ENCODE measurements at regions of chr4 and their contacts with region 1.

Region 1: GRCh38 chr4:39977489-39978377 is at the start of gene PDS5A:
- DNase-seq: peak; percentile 86 to 92
- ATAC-seq: peak; percentile 89 to 93 (median 91)
- H3K4me3 ChIP-seq: peak within 1 kb of the TSS; percentile 72 to 98 (median 93)
- H3K27ac ChIP-seq: peak within 1 kb of the TSS; percentile 84 to 96 (median 94)
- H3K4me1 ChIP-seq: peaks cover 0 to 34% (median 20%) of the 10 kb centered on the region in 9 donors
- H3K27me3 ChIP-seq: no peaks in the 10 kb centered on the region
- CTCF ChIP-seq: peak; percentile 74 to 95 (median 87)
- total RNA-seq, gene PDS5A: 22.9 to 36.2 (median 31.0) TPM

Region 2: DNA sequence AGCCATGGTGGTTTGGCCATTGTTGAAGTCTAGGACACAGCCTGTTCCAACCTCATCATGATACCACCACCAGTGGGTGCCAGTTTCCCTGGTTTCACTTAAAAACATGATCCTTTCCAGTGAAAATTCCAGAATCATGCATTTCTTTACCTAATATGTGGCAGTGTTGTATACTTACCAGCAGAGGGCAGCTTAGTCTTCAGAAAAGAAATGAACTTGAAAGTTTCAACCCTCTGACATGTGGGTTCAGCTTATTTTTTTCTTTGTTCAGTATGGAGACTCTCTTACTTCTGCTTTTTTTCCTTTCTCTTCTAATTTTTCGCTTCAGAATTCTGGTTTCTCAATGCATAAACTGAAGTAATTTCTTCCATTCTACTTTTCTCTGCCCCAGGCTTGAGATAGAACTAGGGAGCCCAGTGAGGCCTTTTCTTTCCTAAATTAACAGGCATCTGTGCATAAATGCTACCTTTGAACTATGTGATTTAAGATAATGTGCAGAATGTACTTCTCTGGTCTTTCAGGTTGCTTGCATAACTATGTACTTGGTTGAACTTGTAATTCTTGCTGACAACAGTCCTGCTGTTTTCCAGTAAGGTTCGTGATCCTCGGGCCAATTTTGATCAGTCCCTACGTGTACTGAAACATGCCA is 508.2 kb before region 1 on chr4:
- intact Hi-C with region 1: loop called in 9 of 10 experiments (anchors 1 to 5 kb)
- DNase-seq: peak in 1 of 2 donors; percentile 16
- ATAC-seq: peak in 7 of 8 donors; percentile 64 to 85 (median 74)
- H3K4me3 ChIP-seq: no peak overlapping the region
- H3K27ac ChIP-seq: peak overlapping the region in 2 of 10 donors; percentile 11 to 66
- H3K4me1 ChIP-seq: peaks cover 0 to 12% (median 0%) of the 10 kb centered on the region in 9 donors
- H3K27me3 ChIP-seq: no peaks in the 10 kb centered on the region
- CTCF ChIP-seq: peak; percentile 58 to 89 (median 83)

Region 3: GRCh38 chr4:39638354-39639240 is 339.1 kb before region 1 on chr4 and contains the start of gene SMIM14:
- intact Hi-C with region 1: loop called in 3 of 10 experiments (anchors 5 kb)
- DNase-seq: peak; percentile 98 to 99
- ATAC-seq: peak; percentile 97 to 100 (median 98)
- H3K4me3 ChIP-seq: peak within 1 kb of the TSS; percentile 80 to 95 (median 92)
- H3K27ac ChIP-seq: peak within 1 kb of the TSS; percentile 86 to 99 (median 98)
- H3K4me1 ChIP-seq: peaks cover 0 to 35% (median 27%) of the 10 kb centered on the region in 9 donors
- H3K27me3 ChIP-seq: no peaks in the 10 kb centered on the region
- CTCF ChIP-seq: peak in 4 of 9 donors; percentile 24 to 35 (median 27)
- total RNA-seq, gene SMIM14: 9.3 to 15.2 (median 11.8) TPM

Region 4: GRCh38 chr4:39697740-39698423 is 279.9 kb before region 1 on chr4 and contains the start of gene UBE2K:
- intact Hi-C with region 1: loop called (anchors 1 to 5 kb)
- DNase-seq: peak; percentile 86 to 93
- ATAC-seq: peak; percentile 97 to 100 (median 98)
- H3K4me3 ChIP-seq: peak within 1 kb of the TSS; percentile 69 to 95 (median 80)
- H3K27ac ChIP-seq: peak within 1 kb of the TSS; percentile 51 to 99 (median 95)
- H3K4me1 ChIP-seq: peaks cover 0 to 49% (median 33%) of the 10 kb centered on the region in 9 donors
- H3K27me3 ChIP-seq: no peaks in the 10 kb centered on the region
- CTCF ChIP-seq: peak in 2 of 9 donors; percentile 6 to 14
- total RNA-seq, gene UBE2K: 52.9 to 74.0 (median 57.7) TPM

Region 5: GRCh38 chr4:39883646-39884045 is 94.1 kb before region 1 on chr4:
- intact Hi-C with region 1: loop called in 2 of 10 experiments (anchors 10 kb)
- DNase-seq: no peak
- ATAC-seq: no peak
- H3K4me3 ChIP-seq: no peak overlapping the region
- H3K27ac ChIP-seq: no peak overlapping the region
- H3K4me1 ChIP-seq: no peaks in the 10 kb centered on the region
- H3K27me3 ChIP-seq: no peaks in the 10 kb centered on the region
- CTCF ChIP-seq: no peak

Region 6: GRCh38 chr4:39928538-39928937 is 49.2 kb before region 1 on chr4:
- intact Hi-C with region 1: loop called in 1 of 10 experiments (anchors 10 kb)
- DNase-seq: no peak
- ATAC-seq: peak in 1 of 8 donors; percentile 56
- H3K4me3 ChIP-seq: no peak overlapping the region
- H3K27ac ChIP-seq: no peak overlapping the region
- H3K4me1 ChIP-seq: peaks cover 0 to 22% (median 8%) of the 10 kb centered on the region in 9 donors
- H3K27me3 ChIP-seq: no peaks in the 10 kb centered on the region
- CTCF ChIP-seq: no peak

Measured in heart right ventricle (tissue), 16 donors.